Right ventricle myocardium inferior (tissue), 1 donor: ENCODE measurements at regions of chrX and their contacts with region 1.

Region 1: DNA sequence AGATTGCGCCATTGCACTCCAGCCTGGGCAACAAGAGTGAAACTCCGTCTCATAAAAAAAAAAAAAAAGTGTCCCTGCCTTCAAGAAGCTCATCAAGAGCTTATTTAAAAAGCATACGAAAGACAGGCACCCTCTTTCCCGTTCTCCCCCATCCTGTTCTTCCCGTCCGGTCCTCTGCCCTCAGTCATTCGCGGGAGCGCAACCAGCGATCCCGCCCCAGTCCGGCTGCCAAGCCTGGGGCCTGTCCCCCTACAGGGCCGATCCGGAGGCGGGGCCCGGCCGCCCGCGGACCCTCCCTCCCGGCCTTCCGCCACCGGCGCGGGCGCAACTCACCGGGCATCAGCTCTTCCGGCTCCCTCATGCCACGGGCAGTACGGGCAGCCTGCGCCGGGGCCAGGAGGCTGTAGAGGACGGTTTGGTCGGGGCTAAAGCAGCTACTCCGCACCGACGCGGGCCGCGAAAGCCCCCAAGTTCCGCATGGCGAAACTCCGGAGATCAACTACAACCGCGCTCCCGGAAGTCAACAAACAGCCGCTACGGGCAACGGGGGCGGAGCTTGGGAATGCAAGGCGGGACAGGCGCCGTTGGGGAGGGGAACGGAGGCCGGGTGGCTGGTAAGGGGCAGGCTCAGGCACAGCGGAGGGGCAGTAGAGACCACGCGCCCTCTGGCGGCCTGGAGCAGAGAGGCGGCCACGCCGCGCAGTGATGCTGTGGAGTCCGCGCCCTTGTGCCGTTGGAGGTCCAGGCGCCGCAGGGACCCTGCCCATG is at the start of gene RPGR:
- DNase-seq: peak; percentile 97
- ATAC-seq: peak; percentile 99
- total RNA-seq, gene RPGR: 3.8 TPM

Region 2: DNA sequence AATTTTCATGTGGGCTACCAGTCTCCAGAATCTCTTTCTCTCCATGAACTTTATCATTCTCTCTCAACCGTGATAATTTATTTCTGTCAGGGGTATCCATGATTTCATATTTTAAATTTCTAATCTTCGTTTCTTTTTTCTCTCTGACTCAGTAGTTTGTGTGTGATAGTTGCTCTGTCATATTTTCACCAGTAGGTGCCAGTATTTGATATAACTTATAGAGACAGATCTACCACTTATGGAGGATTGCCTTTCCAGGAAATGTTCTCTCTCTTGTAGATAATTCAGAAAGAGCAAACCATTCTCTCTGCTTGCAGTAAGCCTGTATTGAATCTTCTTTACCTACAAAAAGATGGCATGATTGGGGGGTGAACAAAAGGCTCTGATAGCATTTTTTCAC is 400.5 kb before region 1 on chrX:
- intact Hi-C with region 1: loop called (anchors 2 kb)
- DNase-seq: no peak
- ATAC-seq: no peak

Region 3: DNA sequence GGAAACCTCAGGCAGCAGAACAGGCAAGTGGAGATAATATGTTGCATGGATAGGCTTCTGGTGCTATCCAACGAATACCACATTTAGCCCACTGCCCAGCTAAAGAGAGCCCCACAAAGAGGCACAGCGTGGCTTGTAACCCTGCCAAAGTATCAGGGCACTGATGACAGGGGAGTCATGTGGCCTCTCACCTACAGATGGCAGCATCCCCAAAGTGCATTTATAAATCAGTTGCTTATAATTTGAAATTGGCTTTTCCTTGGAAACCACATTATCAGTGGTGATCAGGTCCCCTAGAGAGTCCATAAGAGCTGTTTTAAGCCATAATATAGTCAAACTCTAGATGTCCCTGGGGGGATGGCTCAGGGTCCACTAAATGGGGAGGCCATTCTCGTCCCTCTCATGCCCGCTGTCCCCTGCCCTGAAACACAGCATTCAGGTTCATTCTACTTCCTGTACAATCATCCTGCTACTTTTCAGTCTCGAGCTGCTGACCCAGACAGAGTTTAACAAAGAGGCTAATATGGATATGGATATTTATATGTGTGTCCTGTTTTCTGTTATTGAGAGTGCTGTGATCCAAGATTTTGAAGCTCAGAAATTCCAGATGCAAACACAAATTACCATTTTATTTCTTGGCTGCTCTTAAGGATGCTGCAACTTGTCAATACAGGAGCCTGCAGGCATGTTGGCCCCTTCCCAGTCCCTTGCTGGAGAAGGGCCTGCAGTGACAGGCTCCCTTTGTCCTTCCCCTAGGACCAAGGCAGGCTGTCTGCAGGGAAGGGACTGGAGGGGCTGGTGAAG is 135.0 kb before region 1 on chrX:
- intact Hi-C with region 1: loop called (anchors 5 kb)
- DNase-seq: peak; percentile 35
- ATAC-seq: no peak

Region 4: GRCh38 chrX:38220024-38220414 is 107.2 kb before region 1 on chrX:
- intact Hi-C with region 1: loop called (anchors 1 kb)
- DNase-seq: no peak
- ATAC-seq: peak; percentile 58